ENCODE measurements at regions of chr20 and their contacts with region 1.

Region 1: GRCh38 chr20:32594204-32594603 is 9.1 kb upstream of the NOL4L start:
- DNase-seq: no peak
- ATAC-seq: no peak
- H3K4me3 ChIP-seq: no peak overlapping the region
- H3K27ac ChIP-seq: no peak overlapping the region
- H3K4me1 ChIP-seq: no peaks in the 10 kb centered on the region
- H3K27me3 ChIP-seq: peaks cover 0 to 8% (median 0%) of the 10 kb centered on the region in 7 donors
- CTCF ChIP-seq: no peak

Region 2: DNA sequence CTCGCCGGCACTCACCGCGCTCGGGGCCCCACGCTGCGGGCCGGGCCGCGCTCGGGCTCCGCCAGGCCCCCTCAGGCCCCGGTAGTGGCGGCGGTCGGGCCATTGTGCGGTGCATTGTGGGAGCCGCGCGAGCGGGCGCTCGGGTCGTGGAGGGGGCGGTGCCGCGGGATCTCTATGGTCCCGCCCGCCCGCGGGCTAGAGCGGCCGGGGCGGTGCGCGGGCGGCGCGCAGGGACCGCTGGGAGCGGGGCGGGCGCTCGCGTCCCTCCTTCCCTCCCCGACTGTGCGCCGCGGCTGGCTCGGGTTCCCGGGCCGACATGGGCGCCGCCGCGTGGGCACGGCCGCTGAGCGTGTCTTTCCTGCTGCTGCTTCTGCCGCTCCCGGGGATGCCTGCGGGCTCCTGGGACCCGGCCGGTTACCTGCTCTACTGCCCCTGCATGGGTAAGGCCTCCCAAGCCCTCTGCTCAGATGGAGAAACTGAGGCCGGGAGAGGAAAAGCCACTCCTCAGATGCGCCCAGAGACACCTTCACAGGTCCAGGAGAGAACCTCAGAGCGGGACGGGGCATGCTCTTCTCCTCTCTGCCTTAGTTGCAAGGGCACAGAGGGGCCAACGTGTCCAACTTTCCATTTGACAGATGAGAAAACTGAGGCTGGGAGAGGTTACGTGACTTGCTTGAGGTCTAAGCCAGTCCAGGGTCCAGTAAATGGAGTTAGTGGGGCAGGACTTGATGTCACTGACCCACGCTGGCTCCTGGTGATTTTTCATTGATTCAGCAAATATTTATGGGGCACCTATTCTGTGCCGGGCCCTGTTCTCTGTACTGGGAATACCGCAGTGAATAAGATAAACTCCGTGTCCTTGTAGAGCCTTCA is 386.3 kb before region 1 on chr20 and contains the starts of genes PLAGL2 and POFUT1:
- intact Hi-C with region 1: no loop called
- DNase-seq: peak; percentile 90 to 91
- ATAC-seq: peak; percentile 91 to 98 (median 95)
- H3K4me3 ChIP-seq: peak within 1 kb of the TSS; percentile 70 to 100 (median 98)
- H3K27ac ChIP-seq: peak within 1 kb of the TSS; percentile 88 to 99 (median 95)
- H3K4me1 ChIP-seq: peaks cover 22 to 63% (median 52%) of the 10 kb centered on the region in 9 donors
- H3K27me3 ChIP-seq: no peaks in the 10 kb centered on the region
- CTCF ChIP-seq: peak in 5 of 9 donors; percentile 17 to 57 (median 52)
- total RNA-seq, gene PLAGL2: 5.6 to 12.3 (median 7.9) TPM
- total RNA-seq, gene POFUT1: 25.9 to 32.9 (median 27.9) TPM

Region 3: GRCh38 chr20:32612351-32613191 is 18.4 kb after region 1 on chr20:
- intact Hi-C with region 1: loop called in 1 of 10 experiments (anchors 1 kb)
- DNase-seq: no peak
- ATAC-seq: no peak
- H3K4me3 ChIP-seq: no peak overlapping the region
- H3K27ac ChIP-seq: no peak overlapping the region
- H3K4me1 ChIP-seq: no peaks in the 10 kb centered on the region
- H3K27me3 ChIP-seq: peaks cover 0 to 7% (median 0%) of the 10 kb centered on the region in 7 donors
- CTCF ChIP-seq: no peak

Region 4: DNA sequence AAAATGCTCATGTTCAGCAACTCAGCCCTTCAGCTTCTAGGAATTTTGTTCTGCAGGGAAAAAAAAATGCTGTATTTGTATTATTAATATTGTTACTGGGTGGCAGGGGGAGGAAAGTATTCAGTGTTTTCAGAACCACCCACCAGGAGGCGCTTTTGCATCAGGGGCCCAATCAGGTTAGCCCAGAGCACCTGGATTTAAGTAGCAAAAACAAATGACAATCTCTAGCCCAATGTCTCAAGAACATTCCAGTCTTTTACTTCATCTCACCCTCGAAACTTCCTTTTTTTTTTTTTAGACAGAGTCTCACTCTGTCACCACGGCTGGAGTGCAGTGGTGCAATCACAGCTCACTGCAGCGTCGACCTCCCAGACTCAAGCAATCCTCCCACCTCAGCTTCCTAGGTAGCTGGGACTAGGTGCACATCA is 80.2 kb after region 1 on chr20:
- intact Hi-C with region 1: no loop called
- DNase-seq: no peak
- ATAC-seq: peak in 3 of 8 donors; percentile 34 to 48 (median 44)
- H3K4me3 ChIP-seq: no peak overlapping the region
- H3K27ac ChIP-seq: no peak overlapping the region
- H3K4me1 ChIP-seq: peaks cover 0 to 31% (median 0%) of the 10 kb centered on the region in 9 donors
- H3K27me3 ChIP-seq: no peaks in the 10 kb centered on the region
- CTCF ChIP-seq: peak; percentile 44 to 74 (median 66)